ENCODE measurements at regions of chr22 and their contacts with region 1.

Region 1: DNA sequence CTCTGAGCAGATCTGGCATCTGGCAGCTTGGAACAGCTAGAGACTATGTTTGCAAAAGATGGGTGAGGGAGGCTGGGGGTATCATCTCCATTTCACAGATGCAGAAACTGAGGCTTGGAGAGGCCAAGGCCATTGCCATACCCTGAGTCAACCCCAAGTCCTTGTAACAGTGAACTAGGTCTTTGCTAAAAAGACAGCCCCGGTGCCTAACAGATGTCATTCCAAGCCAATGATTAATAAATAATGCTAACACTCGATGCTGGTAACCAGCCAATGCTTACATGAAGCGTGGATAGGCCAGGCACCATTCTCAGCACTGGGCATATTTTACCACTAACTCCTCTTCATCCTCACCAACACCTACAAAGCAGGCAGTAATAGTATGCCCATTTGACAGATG is 164.0 kb downstream of the MN1 start:
- DNase-seq: no peak

Region 2: DNA sequence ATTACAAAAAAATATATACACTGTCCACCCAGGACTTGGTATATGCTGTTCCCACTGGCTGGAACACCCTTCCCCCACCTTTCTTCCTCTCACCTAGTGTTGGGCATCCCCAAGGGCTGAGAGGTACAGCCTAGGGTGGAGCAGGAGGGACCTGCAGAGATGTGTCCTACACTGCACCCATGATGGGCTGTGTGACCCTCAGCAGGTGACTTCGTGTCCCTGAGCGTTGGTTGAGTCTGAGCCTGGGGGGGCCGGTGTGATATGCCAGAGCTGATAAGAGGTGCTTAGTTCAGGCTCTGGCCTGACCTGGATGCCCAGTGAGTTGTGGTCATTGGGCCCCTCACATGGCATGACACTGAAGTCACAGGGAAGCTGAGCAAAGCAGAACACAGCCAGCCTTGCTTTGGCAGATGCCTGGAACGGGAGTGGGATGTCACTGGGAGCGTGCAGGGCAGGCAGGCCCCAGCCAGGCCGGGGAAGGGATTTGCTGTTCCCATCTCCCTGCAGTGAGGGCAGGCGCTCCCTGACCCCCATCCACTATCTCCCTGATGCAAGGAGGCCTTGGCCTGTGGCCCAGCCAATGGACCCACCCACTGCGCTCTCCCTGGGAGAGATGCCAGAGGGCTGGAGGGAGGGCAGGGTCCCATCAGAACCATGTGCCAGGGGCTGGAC is 24.9 kb after region 1 on chr22:
- intact Hi-C with region 1: loop called (anchors 2 kb)
- DNase-seq: peak; percentile 91

Region 3: DNA sequence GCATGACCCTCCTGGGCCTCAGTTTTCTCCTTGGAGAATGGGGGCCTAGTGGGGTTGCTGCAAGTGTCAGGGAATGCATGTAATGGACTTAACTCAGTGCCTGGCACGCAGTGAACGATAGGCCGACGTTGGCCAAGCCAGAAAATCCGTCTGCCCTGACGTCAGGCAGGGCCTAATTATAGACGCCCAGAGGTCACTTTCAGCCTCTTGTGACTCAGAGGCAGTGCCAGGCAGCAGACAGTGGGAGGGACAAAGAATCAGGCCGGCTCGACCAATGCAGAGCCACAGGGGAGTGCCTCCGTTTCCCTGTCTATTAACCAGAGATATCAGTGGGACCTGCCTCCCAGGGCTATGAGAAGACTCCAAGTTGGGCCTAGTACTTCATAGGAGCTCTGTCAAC is 48.9 kb after region 1 on chr22:
- intact Hi-C with region 1: loop called (anchors 1 kb)
- DNase-seq: peak; percentile 93